Tibial artery (tissue), 4 donors: ENCODE measurements at regions of chr3 and their contacts with region 1.

Region 1: DNA sequence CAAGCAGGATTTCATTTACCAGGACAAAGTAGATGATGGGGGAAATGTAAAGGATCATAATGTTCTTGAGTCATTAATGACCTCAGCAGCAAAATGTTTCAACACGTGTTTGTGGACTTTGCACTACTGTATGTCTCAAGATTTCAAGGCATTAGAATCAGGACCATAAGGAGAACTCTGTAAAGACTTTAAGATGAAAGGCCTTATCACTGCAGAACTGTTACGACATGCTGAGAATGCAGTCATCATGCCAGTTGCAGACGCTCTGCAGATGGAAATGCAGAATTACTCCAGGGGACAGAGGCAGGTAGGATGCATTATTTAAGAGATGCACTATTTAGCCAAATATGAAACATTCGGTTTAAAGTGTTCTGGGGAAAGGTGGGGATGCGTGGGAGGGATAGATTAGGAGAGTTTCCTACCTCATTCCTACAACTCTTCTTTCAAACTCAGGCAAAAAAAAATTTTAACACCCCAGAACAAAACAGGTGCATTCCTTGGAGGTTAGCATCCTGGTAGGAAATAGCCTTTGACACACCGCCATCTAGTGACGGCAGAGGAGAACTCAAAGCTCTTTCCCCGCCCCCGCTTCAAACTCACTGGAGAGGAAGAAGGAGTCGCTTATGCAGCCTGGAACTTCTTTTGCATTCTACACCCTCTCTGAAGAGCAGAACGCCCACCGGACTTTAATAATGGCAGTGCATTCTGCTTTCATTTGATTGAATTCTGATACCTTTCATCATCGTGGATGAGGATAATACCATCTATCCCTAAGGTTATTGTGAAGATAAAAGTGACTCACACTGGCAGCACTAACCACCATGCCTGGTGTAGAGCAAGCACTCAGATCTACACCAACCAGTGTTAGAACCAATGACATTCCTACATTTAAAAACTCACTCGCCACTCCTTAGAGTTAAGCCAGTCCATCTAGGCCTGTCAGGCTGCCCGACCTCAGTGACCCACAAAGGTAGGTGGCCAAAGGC is 43.1 kb upstream of the TOPAZ1 start:
- DNase-seq: peak; percentile 67 to 76
- H3K4me3 ChIP-seq: no peak overlapping the region
- H3K27ac ChIP-seq: no peak overlapping the region
- H3K4me1 ChIP-seq: no peaks in the 10 kb centered on the region
- H3K27me3 ChIP-seq: peaks cover 0 to 4% of the 10 kb centered on the region in 2 donors
- CTCF ChIP-seq: peak; percentile 79 to 84

Region 2: DNA sequence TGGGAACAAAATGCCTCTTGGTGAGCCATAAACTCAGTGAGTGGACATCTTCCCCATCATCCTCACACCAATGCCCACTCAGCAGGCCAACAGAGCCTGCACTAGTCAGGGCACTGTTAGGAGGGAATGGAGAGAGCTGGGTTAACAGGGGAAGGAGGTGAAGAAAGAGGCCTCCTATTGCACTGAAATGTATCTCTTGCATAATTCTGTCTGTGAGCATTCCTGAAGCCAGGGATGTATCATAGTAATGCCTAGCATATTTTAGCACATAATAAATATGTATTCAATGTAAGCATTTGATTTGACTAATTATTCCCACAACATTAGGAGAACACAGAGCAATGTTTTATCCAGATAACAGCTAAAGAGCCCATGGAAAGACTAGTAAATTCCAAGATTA is 658.0 kb before region 1 on chr3:
- intact Hi-C with region 1: loop called (anchors 5 kb)
- DNase-seq: no peak
- H3K4me3 ChIP-seq: no peak overlapping the region
- H3K27ac ChIP-seq: no peak overlapping the region
- H3K4me1 ChIP-seq: no peaks in the 10 kb centered on the region
- H3K27me3 ChIP-seq: no peaks in the 10 kb centered on the region
- CTCF ChIP-seq: no peak

Region 3: DNA sequence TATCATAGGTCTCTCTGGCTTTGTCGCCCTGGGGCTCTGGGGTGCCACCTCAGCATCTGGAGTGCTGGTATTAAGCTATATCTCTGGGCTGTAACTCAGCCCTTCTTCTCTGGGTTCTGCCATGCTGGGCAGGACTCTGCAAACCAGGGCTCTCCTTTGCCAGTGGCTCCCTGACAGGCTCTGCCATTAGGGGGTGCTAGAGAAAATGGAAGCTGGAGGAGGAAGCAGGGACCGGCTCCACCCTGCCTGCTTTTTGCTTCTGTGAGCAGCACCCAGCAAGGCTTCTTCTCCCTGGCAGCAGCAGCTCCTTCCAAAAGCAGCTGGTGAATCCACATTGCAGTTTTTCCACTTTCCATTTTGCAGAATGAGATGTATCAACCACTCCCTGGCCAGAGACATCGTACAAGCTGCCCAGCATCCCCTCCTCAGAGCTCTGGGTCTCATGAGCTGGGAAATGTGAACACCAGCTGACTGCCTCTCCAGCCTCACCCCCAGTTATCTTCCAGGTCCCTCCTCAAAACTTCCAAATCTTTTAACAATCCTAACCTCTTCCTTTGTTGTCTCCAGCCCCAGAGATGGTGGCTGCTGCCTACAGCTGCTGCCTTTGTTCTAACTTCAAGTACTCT is 342.8 kb before region 1 on chr3:
- intact Hi-C with region 1: loop called (anchors 10 kb)
- DNase-seq: peak; percentile 48 to 76
- H3K4me3 ChIP-seq: no peak overlapping the region
- H3K27ac ChIP-seq: no peak overlapping the region
- H3K4me1 ChIP-seq: peaks cover 0 to 5% (median 0%) of the 10 kb centered on the region in 4 donors
- H3K27me3 ChIP-seq: peaks cover 0 to 24% of the 10 kb centered on the region in 2 donors
- CTCF ChIP-seq: peak; percentile 46 to 48

Region 4: GRCh38 chr3:44338010-44338827 is 139.6 kb after region 1 on chr3 and contains the start of gene TCAIM:
- intact Hi-C with region 1: no loop called
- DNase-seq: peak; percentile 95 to 99
- H3K4me3 ChIP-seq: peak within 1 kb of the TSS; percentile 74 to 88
- H3K27ac ChIP-seq: peak within 1 kb of the TSS; percentile 94 to 98
- H3K4me1 ChIP-seq: peaks cover 0 to 44% (median 22%) of the 10 kb centered on the region in 4 donors
- H3K27me3 ChIP-seq: no peaks in the 10 kb centered on the region
- CTCF ChIP-seq: no peak